Right ventricle myocardium superior (tissue), 1 donor: ENCODE measurements at regions of chr9 and their contacts with region 1.

Region 1: DNA sequence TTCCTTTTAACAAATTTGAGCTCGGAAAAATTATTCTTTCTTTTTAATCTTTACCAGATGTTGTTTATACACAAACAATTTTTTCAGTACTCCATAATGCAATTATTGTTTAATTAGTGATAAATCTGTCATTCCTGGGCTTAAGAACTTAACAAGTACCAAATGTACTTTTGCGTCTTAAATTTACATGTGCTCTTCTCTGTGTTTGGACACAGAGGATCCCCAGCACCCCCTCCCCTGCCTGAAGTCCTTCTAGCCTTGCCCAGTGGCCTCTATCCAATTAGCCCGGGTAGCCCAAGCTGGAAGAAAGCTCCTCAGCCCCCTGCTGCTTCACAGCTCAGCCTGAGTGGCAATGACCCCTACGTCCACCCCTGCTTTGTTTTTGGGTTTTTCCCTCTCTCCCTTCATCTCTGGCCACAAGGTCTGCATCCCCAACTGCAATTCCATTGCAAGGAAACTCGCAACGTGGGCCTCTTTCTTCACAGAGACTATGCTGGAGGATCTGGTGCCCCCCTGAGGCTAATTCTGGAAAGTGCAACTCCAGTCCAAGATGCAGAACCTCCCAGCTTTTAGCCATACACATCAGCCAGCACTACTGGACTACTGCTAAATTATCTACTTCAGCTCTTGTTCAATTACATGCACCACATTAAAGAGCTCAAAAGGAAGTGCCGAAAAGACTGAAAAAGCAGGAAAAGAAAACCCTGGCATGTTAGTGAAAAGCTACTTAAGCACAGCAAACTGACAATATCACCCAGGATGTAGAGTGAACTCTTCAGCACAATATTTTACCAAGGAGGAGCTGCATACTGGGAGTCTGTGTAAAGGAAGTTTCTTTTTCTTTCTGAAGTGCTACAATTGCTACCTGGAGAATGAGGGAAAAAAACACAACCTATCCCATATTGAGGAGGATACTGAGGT is 186.2 kb downstream of the FANCC start:
- DNase-seq: peak; percentile 62
- ATAC-seq: peak; percentile 60

Region 2: DNA sequence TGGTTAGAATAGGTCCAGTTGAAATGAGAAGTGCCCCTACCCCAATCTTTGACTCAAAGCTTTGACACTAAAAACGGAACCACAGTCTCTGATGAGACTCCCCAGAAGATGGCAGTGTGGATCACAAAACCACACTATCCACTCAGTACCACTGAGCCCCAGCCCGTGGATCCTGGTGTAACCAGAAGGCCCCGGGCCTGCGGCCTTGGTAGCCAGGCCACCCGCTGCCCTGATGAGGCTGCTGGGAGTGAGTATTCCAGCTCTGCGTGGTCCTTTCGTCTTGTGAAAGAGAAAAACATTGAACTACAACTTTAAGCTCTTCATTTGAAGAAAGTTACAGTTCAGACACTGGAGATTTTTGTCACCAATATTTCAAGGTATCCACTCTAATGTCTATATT is 449.8 kb before region 1 on chr9:
- intact Hi-C with region 1: loop called (anchors 2 kb)
- DNase-seq: peak; percentile 87
- ATAC-seq: peak; percentile 97

Region 3: GRCh38 chr9:95545831-95546567 is 414.7 kb after region 1 on chr9:
- intact Hi-C with region 1: no loop called
- DNase-seq: no peak
- ATAC-seq: no peak